Esophagus squamous epithelium (tissue), 5 donors: ENCODE measurements at regions of chr16 and their contacts with region 1.

Region 1: DNA sequence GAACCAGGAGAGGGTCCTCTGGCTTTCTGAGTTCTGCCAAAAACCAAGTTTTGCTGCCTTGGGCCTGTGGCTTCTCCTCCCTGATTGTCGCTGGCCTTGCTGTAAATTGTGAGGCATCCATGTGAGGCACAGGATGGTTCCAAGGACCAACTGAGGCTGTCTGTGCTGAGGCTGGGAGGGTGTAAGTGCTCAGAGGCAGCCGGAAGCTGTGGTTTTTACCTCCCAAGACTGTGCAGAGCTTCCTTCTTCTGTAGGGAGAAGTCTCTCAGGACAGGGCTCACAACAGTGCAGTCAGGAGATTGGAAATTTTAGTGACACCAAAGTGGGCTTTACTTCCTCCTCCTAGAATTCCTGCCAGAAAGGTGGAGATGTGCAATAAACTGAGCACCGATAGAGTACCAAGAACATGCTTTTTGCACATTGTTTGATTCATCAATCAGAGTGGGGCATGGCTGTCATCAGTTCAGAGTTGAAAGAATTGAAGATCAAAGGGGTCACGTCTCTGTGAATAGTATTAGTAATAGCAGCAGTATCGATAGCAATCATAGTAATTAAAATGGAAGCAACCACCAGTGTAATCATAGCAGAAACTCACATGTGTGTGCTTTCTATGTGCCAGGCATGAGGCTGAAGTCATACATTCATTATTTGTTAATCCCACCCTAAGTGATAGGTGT is 467.1 kb downstream of the WWOX start:
- DNase-seq: no peak
- H3K4me3 ChIP-seq: no peak overlapping the region
- H3K27ac ChIP-seq: no peak overlapping the region
- H3K4me1 ChIP-seq: peaks cover 3 to 14% (median 4%) of the 10 kb centered on the region in 3 donors
- H3K27me3 ChIP-seq: no peaks in the 10 kb centered on the region
- CTCF ChIP-seq: no peak
- POLR2A ChIP-seq: no peak

Region 2: DNA sequence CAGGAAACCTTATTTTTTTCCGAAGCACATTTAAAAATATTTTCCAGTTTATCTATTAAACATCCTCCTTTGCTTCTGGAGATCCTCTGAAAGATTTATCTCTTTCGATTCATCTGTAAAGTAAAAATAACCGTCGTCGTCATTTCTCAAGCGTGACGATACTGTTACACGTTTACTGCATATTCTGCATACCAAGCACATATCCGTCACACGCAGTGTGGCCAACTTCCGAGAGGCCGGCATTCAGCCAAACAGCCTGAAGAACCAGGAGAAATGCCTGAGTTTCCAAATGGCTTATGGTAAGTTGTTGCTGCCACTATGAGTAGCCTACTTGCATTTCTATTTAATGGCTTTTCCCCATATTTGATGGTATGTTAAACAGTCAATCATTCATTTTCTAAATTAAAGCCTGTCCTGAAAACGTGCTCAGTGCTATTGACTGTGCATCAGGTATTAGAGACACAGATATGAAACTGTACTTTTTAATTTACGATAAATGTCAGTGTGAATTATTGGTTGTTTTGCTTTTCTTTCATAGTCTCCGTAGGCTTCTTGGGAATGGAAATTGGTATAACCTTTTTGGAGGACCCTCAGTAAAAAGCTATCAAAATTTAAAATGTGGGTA is 191.4 kb before region 1 on chr16:
- intact Hi-C with region 1: no loop called
- DNase-seq: no peak
- H3K4me3 ChIP-seq: no peak overlapping the region
- H3K27ac ChIP-seq: no peak overlapping the region
- H3K4me1 ChIP-seq: no peaks in the 10 kb centered on the region
- H3K27me3 ChIP-seq: no peaks in the 10 kb centered on the region
- CTCF ChIP-seq: no peak
- POLR2A ChIP-seq: no peak

Region 3: GRCh38 chr16:78421181-78421708 is 145.3 kb before region 1 on chr16:
- intact Hi-C with region 1: no loop called
- DNase-seq: no peak
- H3K4me3 ChIP-seq: no peak overlapping the region
- H3K27ac ChIP-seq: no peak overlapping the region
- H3K4me1 ChIP-seq: no peaks in the 10 kb centered on the region
- H3K27me3 ChIP-seq: no peaks in the 10 kb centered on the region
- CTCF ChIP-seq: no peak
- POLR2A ChIP-seq: no peak

Region 4: GRCh38 chr16:78684040-78684611 is 117.6 kb after region 1 on chr16:
- intact Hi-C with region 1: no loop called
- DNase-seq: no peak
- H3K4me3 ChIP-seq: no peak overlapping the region
- H3K27ac ChIP-seq: peak overlapping the region; percentile 53 to 85 (median 70)
- H3K4me1 ChIP-seq: peaks cover 3 to 32% (median 13%) of the 10 kb centered on the region in 3 donors
- H3K27me3 ChIP-seq: no peaks in the 10 kb centered on the region
- CTCF ChIP-seq: no peak
- POLR2A ChIP-seq: no peak

Region 5: GRCh38 chr16:79564671-79565107 is 998.2 kb after region 1 on chr16:
- intact Hi-C with region 1: loop called (anchors 5 kb)
- DNase-seq: no peak
- H3K4me3 ChIP-seq: no peak overlapping the region
- H3K27ac ChIP-seq: no peak overlapping the region
- H3K4me1 ChIP-seq: no peaks in the 10 kb centered on the region
- H3K27me3 ChIP-seq: no peaks in the 10 kb centered on the region
- CTCF ChIP-seq: no peak
- POLR2A ChIP-seq: no peak